ENCODE measurements at regions of chr22 and their contacts with region 1.

Region 1: DNA sequence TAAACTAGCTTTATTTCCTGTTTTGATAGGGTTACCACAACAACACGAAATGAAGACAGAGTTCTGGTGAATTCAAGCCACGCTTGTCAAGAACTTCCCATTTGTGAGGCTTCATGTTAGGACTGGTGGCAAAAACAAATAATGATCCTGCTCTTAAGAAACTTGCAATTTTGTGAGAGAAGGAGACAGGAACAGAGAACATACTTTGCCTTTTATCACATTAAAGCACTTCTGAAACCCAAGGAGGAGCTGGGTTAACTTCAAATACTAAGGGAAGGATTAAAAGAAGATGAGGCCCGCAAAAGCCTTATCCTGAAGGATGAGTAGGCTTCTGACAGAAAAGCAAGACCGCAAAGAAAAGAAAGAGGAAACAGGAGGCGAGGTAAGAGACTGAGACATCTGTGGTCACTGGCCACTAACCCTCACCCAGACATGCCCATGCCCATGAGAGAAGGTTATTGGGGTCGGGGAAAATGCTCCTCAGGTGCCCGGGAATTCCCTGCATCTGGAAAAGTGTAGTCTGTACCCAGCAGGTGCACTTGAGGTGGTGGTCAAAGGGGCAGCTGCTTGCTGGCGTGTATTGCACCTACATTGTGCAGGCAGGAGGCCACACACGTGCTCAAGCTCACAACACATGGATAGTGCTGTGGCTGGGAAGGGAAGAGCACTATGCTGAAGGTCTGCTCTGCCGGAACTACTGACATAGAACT is 50.5 kb downstream of the MAPK1 start:
- DNase-seq: peak in 1 of 2 donors; percentile 51
- ATAC-seq: peak; percentile 67 to 93 (median 88)
- H3K4me3 ChIP-seq: peak overlapping the region in 4 of 10 donors; percentile 8 to 23 (median 20)
- H3K27ac ChIP-seq: peak overlapping the region; percentile 2 to 84 (median 70)
- H3K4me1 ChIP-seq: peaks cover 9 to 63% (median 47%) of the 10 kb centered on the region in 9 donors
- H3K27me3 ChIP-seq: no peaks in the 10 kb centered on the region
- CTCF ChIP-seq: no peak

Region 2: GRCh38 chr22:21629262-21630149 is 187.4 kb before region 1 on chr22 and contains the start of gene YDJC:
- intact Hi-C with region 1: no loop called
- DNase-seq: peak; percentile 92 to 94
- ATAC-seq: peak; percentile 96 to 98 (median 98)
- H3K4me3 ChIP-seq: peak within 1 kb of the TSS; percentile 75 to 100 (median 88)
- H3K27ac ChIP-seq: peak within 1 kb of the TSS in 9 of 10 donors; percentile 17 to 92 (median 71)
- H3K4me1 ChIP-seq: peaks cover 0 to 39% (median 25%) of the 10 kb centered on the region in 9 donors
- H3K27me3 ChIP-seq: no peaks in the 10 kb centered on the region
- CTCF ChIP-seq: peak in 7 of 9 donors; percentile 10 to 97 (median 37)
- total RNA-seq, gene YDJC: 2.3 to 6.1 (median 4.0) TPM

Region 3: DNA sequence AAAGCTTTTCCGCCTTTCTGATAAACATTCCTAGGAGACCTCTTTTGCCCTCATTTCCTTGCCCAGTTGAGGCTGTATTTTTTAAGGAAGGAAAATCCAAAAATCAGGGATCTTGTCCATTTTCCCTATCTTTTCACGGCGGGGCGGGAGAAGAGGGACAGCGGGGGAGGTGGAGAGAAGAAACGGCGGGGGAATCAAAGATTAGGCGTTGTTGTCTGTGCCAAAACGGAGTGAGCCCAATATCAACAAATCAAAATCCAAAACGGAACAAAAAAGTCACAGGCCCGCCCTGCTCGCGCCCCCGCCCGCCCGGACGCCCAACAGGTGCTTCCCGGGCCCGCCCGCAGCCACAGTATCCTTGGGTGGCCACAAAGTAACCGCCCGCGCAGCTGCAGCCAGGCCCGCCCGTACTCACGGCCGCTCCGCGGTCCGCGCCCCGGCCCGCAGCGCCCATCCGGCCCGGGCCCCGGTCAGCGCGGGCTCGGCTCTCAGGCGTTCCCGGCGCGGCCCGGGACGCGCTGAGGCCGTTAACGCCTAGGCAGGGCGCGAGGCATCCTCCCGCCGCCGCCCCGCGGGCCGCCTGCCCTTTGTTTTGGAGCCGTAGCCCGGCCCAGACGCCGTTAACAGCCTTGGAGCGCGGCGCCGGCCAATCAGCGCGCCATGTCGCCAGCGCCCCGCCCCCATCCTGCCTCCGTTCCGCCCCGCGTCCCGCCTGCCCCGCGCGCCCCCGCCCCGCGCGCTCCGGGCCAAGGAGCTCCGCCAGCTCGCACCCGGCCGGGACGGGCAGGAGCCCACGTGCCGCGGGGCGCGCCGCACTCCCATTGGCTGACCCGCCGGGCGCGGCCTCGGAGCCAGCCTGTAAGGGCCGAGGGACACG is 81.5 kb before region 1 on chr22 and contains the start of gene YPEL1:
- intact Hi-C with region 1: loop called in 1 of 10 experiments (anchors 10 kb)
- DNase-seq: peak; percentile 95 to 98
- ATAC-seq: peak; percentile 97 to 99 (median 98)
- H3K4me3 ChIP-seq: peak within 1 kb of the TSS; percentile 29 to 80 (median 65)
- H3K27ac ChIP-seq: peak within 1 kb of the TSS in 9 of 10 donors; percentile 64 to 86 (median 78)
- H3K4me1 ChIP-seq: peaks cover 5 to 20% (median 13%) of the 10 kb centered on the region in 9 donors
- H3K27me3 ChIP-seq: no peaks in the 10 kb centered on the region
- CTCF ChIP-seq: no peak
- total RNA-seq, gene YPEL1: 1.5 to 14.6 (median 8.0) TPM